ENCODE measurements at regions of chr12 and their contacts with region 1.

Region 1: GRCh38 chr12:122399592-122400373 is 22.7 kb downstream of the CLIP1 start:
- DNase-seq: peak in 8 of 9 donors; percentile 27 to 76 (median 65)
- ATAC-seq: peak; percentile 77
- H3K4me3 ChIP-seq: no peak overlapping the region
- H3K4me3 Mint-ChIP-seq: peak overlapping the region; percentile 40 to 80 (median 69)
- H3K27ac ChIP-seq: peak overlapping the region; percentile 56
- H3K27ac Mint-ChIP-seq: peak overlapping the region; percentile 83 to 96 (median 89)
- H3K4me1 ChIP-seq: peaks cover 0 to 6% of the 10 kb centered on the region in 2 donors
- H3K4me1 Mint-ChIP-seq: peaks cover 24 to 50% (median 39%) of the 10 kb centered on the region in 7 donors
- H3K27me3 ChIP-seq: no peaks in the 10 kb centered on the region
- H3K27me3 Mint-ChIP-seq: no peaks in the 10 kb centered on the region

Region 2: DNA sequence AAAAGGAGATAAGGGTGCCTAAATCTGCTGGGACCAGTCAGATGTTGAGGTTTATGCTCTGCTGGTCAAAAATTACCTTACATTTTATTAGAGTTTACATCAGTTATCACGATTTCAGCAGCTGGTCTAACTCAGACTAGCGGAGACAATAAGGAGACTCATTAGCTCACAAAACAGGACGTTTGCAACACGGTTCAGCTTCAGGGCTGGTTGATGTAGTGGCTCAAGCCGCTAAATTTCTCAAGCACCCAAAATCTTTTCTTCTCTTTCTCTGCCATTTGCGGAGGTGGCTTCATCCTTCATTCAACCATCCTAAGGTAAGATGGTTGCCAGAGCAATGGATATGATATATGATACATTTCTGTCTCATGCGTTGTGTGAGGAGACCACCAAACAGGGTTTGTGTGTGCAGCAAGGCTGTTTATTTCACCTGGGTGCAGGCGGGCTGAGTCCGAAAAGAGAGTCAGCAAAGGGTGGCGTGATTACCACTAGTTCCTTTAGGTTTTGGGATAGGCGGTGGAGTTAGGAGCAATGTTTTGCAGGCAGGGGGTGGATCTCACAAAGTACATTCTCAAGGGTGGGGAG is 53.0 kb after region 1 on chr12:
- CTCF ChIA-PET with region 1: interaction called, 7 read pairs
- POLR2A ChIA-PET with region 1: interaction called, 4 read pairs
- intact Hi-C with region 1: loop called in 1 of 2 experiments (anchors 1 kb)
- DNase-seq: no peak
- ATAC-seq: no peak
- H3K4me3 ChIP-seq: peak overlapping the region; percentile 36
- H3K4me3 Mint-ChIP-seq: peak overlapping the region; percentile 64 to 87 (median 81)
- H3K27ac ChIP-seq: peak overlapping the region; percentile 63
- H3K27ac Mint-ChIP-seq: peak overlapping the region; percentile 91 to 99 (median 98)
- H3K4me1 ChIP-seq: peaks cover 22 to 24% of the 10 kb centered on the region in 2 donors
- H3K4me1 Mint-ChIP-seq: peaks cover 22 to 41% (median 33%) of the 10 kb centered on the region in 7 donors
- H3K27me3 ChIP-seq: no peaks in the 10 kb centered on the region
- H3K27me3 Mint-ChIP-seq: no peaks in the 10 kb centered on the region